AG04450 (cell line): ENCODE measurements at regions of chr12 and their contacts with region 1.

Region 1: GRCh38 chr12:27733052-27733656 is 22.5 kb downstream of the MRPS35 start:
- DNase-seq: peak; percentile 4
- H3K4me3 ChIP-seq: no peak overlapping the region
- H3K27ac ChIP-seq: no peak overlapping the region
- H3K27me3 ChIP-seq: no peaks in the 10 kb centered on the region
- CTCF ChIP-seq: peak; percentile 94

Region 2: GRCh38 chr12:27751386-27752047 is 18.4 kb after region 1 on chr12:
- CTCF ChIA-PET with region 1: interaction called, 11 read pairs
- POLR2A ChIA-PET with region 1: no interaction called
- DNase-seq: no peak
- H3K4me3 ChIP-seq: no peak overlapping the region
- H3K27ac ChIP-seq: peak overlapping the region; percentile 12
- H3K27me3 ChIP-seq: no peaks in the 10 kb centered on the region
- CTCF ChIP-seq: no peak

Region 3: GRCh38 chr12:27924350-27925135 is 191.4 kb after region 1 on chr12:
- CTCF ChIA-PET with region 1: interaction called, 13 read pairs
- POLR2A ChIA-PET with region 1: no interaction called
- DNase-seq: no peak
- H3K4me3 ChIP-seq: no peak overlapping the region
- H3K27ac ChIP-seq: no peak overlapping the region
- H3K27me3 ChIP-seq: no peaks in the 10 kb centered on the region
- CTCF ChIP-seq: no peak

Region 4: GRCh38 chr12:27940756-27941402 is 207.7 kb after region 1 on chr12:
- CTCF ChIA-PET with region 1: interaction called, 100 read pairs
- POLR2A ChIA-PET with region 1: no interaction called
- DNase-seq: peak; percentile 47
- H3K4me3 ChIP-seq: no peak overlapping the region
- H3K27ac ChIP-seq: no peak overlapping the region
- H3K27me3 ChIP-seq: no peaks in the 10 kb centered on the region
- CTCF ChIP-seq: peak; percentile 93

Region 5: DNA sequence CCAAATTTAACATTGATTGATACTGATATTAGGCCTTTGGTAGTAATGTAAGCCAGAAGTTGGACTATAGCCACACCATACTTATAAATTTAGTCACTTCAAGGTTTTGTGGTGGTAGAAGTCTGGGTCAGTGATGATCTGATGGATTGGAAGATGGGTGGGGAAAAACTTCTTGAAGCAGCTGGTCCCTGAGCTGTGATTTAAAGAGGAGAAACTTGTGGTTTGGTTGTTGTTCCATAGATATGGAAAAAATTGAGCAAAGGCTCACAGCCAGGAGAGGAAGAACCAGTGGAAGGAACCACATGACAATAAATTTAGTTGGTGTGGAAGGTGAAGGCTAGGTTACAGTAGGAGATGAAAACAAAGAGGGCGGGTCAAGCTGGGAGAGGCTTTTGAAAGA is 213.3 kb after region 1 on chr12:
- CTCF ChIA-PET with region 1: interaction called, 100 read pairs
- POLR2A ChIA-PET with region 1: no interaction called
- DNase-seq: no peak
- H3K4me3 ChIP-seq: no peak overlapping the region
- H3K27ac ChIP-seq: no peak overlapping the region
- H3K27me3 ChIP-seq: no peaks in the 10 kb centered on the region
- CTCF ChIP-seq: no peak

Region 6: GRCh38 chr12:27952510-27952909 is 219.4 kb after region 1 on chr12:
- CTCF ChIA-PET with region 1: interaction called, 15 read pairs
- POLR2A ChIA-PET with region 1: no interaction called
- DNase-seq: no peak
- H3K4me3 ChIP-seq: no peak overlapping the region
- H3K27ac ChIP-seq: no peak overlapping the region
- H3K27me3 ChIP-seq: no peaks in the 10 kb centered on the region
- CTCF ChIP-seq: no peak

Region 7: GRCh38 chr12:28171356-28172060 is 438.4 kb after region 1 on chr12:
- CTCF ChIA-PET with region 1: interaction called, 19 read pairs
- POLR2A ChIA-PET with region 1: no interaction called
- DNase-seq: no peak
- H3K4me3 ChIP-seq: no peak overlapping the region
- H3K27ac ChIP-seq: no peak overlapping the region
- H3K27me3 ChIP-seq: no peaks in the 10 kb centered on the region
- CTCF ChIP-seq: no peak